Activated CD4-positive, alpha-beta T cell treated with anti-CD3 and anti-CD28 coated beads for 36 hours (primary cell): ENCODE measurements at regions of chr17 and their contacts with region 1.

Region 1: DNA sequence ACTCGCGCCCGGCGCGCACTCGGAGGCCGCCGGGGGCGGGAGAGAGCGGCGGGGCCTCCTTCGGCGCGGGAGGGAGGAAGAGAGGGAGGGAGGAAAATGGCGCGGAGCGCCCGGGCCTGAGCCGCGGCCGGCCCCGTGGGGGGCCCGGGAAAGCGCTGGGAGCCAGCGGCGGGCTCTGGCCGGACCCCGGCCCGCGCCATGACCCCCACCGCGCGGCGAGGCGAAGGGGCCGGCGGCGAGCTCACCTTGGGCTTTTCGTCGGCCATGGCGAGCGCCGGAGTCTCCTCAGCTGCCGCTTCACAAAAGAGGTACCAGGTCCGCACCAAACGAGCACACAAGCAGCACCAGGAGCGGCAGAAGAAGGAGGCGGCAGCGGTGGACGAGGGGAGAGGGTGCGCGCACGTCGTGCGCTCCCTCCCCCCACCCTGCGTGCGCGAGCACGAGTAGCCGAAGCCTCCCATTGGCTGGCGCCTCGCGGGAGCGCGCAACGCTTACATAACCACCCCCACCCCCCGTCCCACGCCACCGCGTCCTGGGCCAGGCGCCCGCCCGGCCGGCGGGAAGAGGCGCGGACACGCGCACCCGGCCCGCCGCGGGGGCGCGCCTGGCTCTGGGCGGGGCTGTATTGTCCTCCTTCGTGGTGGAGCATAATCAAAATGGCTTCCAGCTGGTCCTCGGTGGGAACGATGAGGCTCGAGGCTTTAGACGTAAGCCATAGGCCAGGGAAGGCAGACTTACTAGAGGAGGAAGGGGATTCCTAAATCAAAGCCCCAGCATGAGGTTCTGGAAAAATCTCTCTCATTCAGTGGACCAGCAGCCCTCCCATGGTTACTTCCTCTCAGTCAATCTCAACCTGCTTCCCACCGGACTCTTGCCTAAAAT is at the start of gene SUMO2:
- DNase-seq: peak; percentile 98
- ATAC-seq: peak; percentile 85
- H3K4me3 Mint-ChIP-seq: peak within 1 kb of the TSS; percentile 97
- H3K27ac Mint-ChIP-seq: peak within 1 kb of the TSS; percentile 96
- H3K4me1 Mint-ChIP-seq: peaks cover 45% of the 10 kb centered on the region
- H3K27me3 Mint-ChIP-seq: no peaks in the 10 kb centered on the region
- total RNA-seq, gene SUMO2: 594 to 727 TPM

Region 2: DNA sequence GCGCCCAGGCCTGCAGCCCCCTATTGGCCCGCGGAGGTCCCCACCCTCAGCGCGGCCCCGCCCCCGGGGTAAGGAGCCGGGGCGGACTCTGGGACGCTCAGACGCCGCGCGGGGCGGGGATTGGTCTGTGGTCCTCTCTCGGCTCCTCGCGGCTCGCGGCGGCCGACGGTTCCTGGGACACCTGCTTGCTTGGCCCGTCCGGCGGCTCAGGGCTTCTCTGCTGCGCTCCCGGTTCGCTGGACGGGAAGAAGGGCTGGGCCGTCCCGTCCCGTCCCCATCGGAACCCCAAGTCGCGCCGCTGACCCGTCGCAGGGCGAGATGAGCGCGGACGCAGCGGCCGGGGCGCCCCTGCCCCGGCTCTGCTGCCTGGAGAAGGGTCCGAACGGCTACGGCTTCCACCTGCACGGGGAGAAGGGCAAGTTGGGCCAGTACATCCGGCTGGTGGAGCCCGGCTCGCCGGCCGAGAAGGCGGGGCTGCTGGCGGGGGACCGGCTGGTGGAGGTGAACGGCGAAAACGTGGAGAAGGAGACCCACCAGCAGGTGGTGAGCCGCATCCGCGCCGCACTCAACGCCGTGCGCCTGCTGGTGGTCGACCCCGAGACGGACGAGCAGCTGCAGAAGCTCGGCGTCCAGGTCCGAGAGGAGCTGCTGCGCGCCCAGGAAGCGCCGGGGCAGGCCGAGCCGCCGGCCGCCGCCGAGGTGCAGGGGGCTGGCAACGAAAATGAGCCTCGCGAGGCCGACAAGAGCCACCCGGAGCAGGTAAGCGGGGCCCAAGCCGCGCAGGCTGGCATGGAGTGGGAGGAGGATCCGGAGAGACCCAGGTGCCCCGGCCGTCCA is 434.1 kb before region 1 on chr17 and contains the start of gene NHERF1:
- CTCF ChIA-PET with region 1: no interaction called
- POLR2A ChIA-PET with region 1: no interaction called
- intact Hi-C with region 1: loop called in 1 of 2 experiments (anchors 5 kb)
- DNase-seq: peak; percentile 97
- ATAC-seq: peak; percentile 90
- H3K4me3 Mint-ChIP-seq: peak within 1 kb of the TSS; percentile 98
- H3K27ac Mint-ChIP-seq: peak within 1 kb of the TSS; percentile 91
- H3K4me1 Mint-ChIP-seq: peaks cover 56% of the 10 kb centered on the region
- H3K27me3 Mint-ChIP-seq: no peaks in the 10 kb centered on the region
- total RNA-seq, gene NHERF1: 115 to 170 TPM

Region 3: GRCh38 chr17:75046582-75047289 is 136.1 kb before region 1 on chr17 and contains the starts of genes ATP5PD and KCTD2:
- CTCF ChIA-PET with region 1: no interaction called
- POLR2A ChIA-PET with region 1: no interaction called
- intact Hi-C with region 1: loop called in 1 of 2 experiments (anchors 1 kb)
- DNase-seq: peak; percentile 97
- ATAC-seq: peak; percentile 95
- H3K4me3 Mint-ChIP-seq: peak within 1 kb of the TSS; percentile 99
- H3K27ac Mint-ChIP-seq: peak within 1 kb of the TSS; percentile 94
- H3K4me1 Mint-ChIP-seq: peaks cover 37% of the 10 kb centered on the region
- H3K27me3 Mint-ChIP-seq: no peaks in the 10 kb centered on the region
- total RNA-seq, gene ATP5PD: 194 to 237 TPM
- total RNA-seq, gene KCTD2: 15.3 to 16.7 TPM

Region 4: GRCh38 chr17:75087558-75088453 is 95.0 kb before region 1 on chr17 and contains the start of gene SLC16A5:
- CTCF ChIA-PET with region 1: no interaction called
- POLR2A ChIA-PET with region 1: no interaction called
- intact Hi-C with region 1: no loop called
- DNase-seq: peak; percentile 57
- ATAC-seq: peak; percentile 55
- H3K4me3 Mint-ChIP-seq: peak within 1 kb of the TSS; percentile 71
- H3K27ac Mint-ChIP-seq: peak within 1 kb of the TSS; percentile 73
- H3K4me1 Mint-ChIP-seq: peaks cover 51% of the 10 kb centered on the region
- H3K27me3 Mint-ChIP-seq: no peaks in the 10 kb centered on the region
- total RNA-seq, gene SLC16A5: 6.0 to 6.5 TPM

Region 5: GRCh38 chr17:75154195-75155106 is 28.4 kb before region 1 on chr17 and contains the start of gene JPT1:
- CTCF ChIA-PET with region 1: no interaction called
- POLR2A ChIA-PET with region 1: interaction called, 4 read pairs
- intact Hi-C with region 1: loop called (anchors 1 to 2 kb)
- DNase-seq: peak; percentile 99
- ATAC-seq: peak; percentile 98
- H3K4me3 Mint-ChIP-seq: peak within 1 kb of the TSS; percentile 96
- H3K27ac Mint-ChIP-seq: peak within 1 kb of the TSS; percentile 89
- H3K4me1 Mint-ChIP-seq: peaks cover 36% of the 10 kb centered on the region
- H3K27me3 Mint-ChIP-seq: no peaks in the 10 kb centered on the region
- total RNA-seq, gene JPT1: 234 to 238 TPM

Region 6: DNA sequence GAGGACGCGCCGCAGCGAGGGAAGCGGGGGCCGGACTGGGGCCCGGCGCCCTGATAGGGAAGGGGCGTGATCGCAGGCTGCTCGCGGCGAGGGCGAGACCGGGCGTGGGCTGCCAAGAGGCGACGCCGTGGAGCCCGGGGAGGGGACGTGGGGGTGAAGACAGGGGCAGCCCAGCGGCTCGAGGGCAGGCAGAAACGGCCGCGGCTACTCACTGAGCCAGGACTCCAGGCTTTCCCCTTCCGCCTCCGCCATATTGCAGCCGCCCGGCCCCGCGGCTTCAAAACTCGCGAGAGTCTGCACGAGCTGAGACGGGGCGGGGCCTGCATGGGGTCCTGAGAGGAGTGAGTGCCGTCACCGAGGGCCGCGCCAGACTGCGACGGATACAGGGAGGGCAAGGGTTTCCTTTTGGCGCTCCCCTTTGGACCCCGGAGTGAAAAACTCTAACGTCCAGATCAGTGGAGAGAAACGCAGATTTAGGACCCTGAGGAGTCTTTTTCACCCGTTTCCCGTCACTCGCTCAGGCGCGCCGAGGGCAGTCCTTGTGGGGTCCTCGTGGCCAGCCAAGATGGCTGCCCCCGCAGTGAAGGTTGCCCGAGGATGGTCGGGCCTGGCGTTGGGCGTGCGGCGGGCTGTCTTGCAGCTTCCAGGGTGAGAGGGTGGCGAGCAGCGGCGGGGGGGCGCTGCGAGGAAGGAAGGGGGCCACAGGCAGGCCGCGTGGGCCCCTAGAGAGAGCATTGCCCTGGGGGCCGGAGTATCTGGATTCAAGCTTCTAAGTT is 78.7 kb after region 1 on chr17 and contains the starts of genes GGA3 and MRPS7:
- CTCF ChIA-PET with region 1: interaction called, 3 read pairs
- POLR2A ChIA-PET with region 1: interaction called, 3 read pairs
- intact Hi-C with region 1: loop called in 1 of 2 experiments (anchors 1 kb)
- DNase-seq: peak; percentile 98
- ATAC-seq: peak; percentile 91
- H3K4me3 Mint-ChIP-seq: peak within 1 kb of the TSS; percentile 88
- H3K27ac Mint-ChIP-seq: peak within 1 kb of the TSS; percentile 96
- H3K4me1 Mint-ChIP-seq: peaks cover 48% of the 10 kb centered on the region
- H3K27me3 Mint-ChIP-seq: no peaks in the 10 kb centered on the region
- total RNA-seq, gene GGA3: 72.9 to 76.7 TPM
- total RNA-seq, gene MRPS7: 51.4 to 63.8 TPM

Region 7: GRCh38 chr17:75325827-75326225 is 143.0 kb after region 1 on chr17:
- CTCF ChIA-PET with region 1: no interaction called
- POLR2A ChIA-PET with region 1: no interaction called
- intact Hi-C with region 1: no loop called
- DNase-seq: no peak
- ATAC-seq: no peak
- H3K4me3 Mint-ChIP-seq: no peak overlapping the region
- H3K27ac Mint-ChIP-seq: peak overlapping the region; percentile 80
- H3K4me1 Mint-ChIP-seq: peaks cover 36% of the 10 kb centered on the region
- H3K27me3 Mint-ChIP-seq: no peaks in the 10 kb centered on the region

Region 8: DNA sequence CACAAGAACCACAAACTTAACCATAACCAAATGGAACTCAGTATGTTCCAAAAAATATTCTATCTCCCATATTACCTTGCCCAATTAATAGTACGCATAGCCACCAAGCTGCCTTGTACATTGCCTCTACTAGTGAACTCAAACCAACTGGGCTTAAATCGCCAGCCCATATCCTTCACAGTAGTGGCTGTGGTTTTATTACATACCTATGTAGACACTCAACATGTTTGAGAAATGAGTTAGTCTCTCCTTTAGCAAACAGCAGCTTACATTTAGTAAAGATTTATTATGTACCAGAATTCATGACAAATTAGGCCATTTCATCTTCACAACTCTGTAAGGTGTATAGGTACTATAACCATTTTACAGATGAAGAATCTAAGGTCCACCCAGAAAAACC is 181.3 kb after region 1 on chr17:
- CTCF ChIA-PET with region 1: no interaction called
- POLR2A ChIA-PET with region 1: interaction called, 11 read pairs
- intact Hi-C with region 1: no loop called
- DNase-seq: no peak
- ATAC-seq: no peak
- H3K4me3 Mint-ChIP-seq: no peak overlapping the region
- H3K27ac Mint-ChIP-seq: peak overlapping the region; percentile 83
- H3K4me1 Mint-ChIP-seq: peaks cover 94% of the 10 kb centered on the region
- H3K27me3 Mint-ChIP-seq: no peaks in the 10 kb centered on the region